ENCODE measurements at regions of chr10 and their contacts with region 1.

Region 1: GRCh38 chr10:73096449-73097304 is at the start of gene P4HA1:
- DNase-seq: peak; percentile 100
- ATAC-seq: peak; percentile 90 to 97 (median 94)
- H3K4me3 ChIP-seq: peak within 1 kb of the TSS; percentile 70
- H3K27ac ChIP-seq: peak within 1 kb of the TSS; percentile 96
- H3K4me1 ChIP-seq: peaks cover 52% of the 10 kb centered on the region
- H3K27me3 ChIP-seq: no peaks in the 10 kb centered on the region
- CTCF ChIP-seq: peak; percentile 59
- total RNA-seq, gene P4HA1: 38.1 to 205 (median 82.3) TPM

Region 2: DNA sequence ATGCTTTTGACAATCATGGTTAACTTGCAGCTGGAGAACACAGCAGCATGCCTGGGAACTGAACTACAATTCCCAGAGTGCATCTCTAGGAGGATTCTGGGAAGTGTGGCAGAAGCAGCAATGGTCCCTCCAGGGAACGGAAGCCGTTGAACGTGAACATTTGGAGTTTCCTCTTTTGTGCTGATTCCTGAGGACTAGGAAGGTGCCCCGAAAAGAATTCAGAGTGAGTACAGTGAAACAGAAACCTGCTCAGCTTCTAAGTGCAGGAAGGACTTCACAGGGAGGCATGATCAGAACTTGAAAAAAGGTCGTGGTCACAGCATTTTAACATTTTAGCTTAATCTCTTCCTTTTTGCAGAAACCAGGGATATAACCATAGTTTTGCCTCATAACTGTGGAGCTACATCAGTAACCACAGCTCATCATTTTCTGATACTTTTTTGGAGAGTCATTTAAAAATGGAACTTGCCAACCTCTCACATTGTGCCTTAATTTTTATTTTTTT is 13.7 kb after region 1 on chr10 and contains the start of gene NUDT13:
- intact Hi-C with region 1: loop called in 1 of 2 experiments (anchors 2 kb)
- DNase-seq: peak; percentile 55 to 69
- ATAC-seq: peak; percentile 75 to 85 (median 85)
- H3K4me3 ChIP-seq: peak within 1 kb of the TSS; percentile 74
- H3K27ac ChIP-seq: peak within 1 kb of the TSS; percentile 95
- H3K4me1 ChIP-seq: peaks cover 26% of the 10 kb centered on the region
- H3K27me3 ChIP-seq: no peaks in the 10 kb centered on the region
- CTCF ChIP-seq: no peak
- total RNA-seq, gene NUDT13: 1.1 to 3.2 (median 2.3) TPM

Region 3: DNA sequence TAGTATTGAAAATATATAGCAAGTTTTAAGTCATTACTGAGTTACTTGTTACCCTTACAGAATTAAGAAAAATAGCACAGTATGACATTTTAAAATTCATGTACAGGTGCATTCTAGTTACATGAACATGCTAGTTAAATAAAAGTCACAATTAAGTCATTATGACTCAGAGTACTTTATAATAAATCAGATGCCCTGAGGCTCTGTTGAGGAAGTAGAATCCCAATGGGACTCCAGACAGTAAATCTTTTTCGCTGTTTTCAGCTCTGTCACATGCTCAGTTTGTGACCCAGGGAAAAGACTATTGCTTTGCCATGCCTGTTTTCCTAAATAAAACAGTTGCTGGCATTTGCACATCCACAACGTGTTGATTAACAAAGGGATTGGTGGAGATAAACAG is 34.6 kb after region 1 on chr10:
- intact Hi-C with region 1: loop called in 1 of 2 experiments (anchors 5 kb)
- DNase-seq: no peak
- ATAC-seq: peak in 1 of 4 donors; percentile 35
- H3K4me3 ChIP-seq: no peak overlapping the region
- H3K27ac ChIP-seq: no peak overlapping the region
- H3K4me1 ChIP-seq: no peaks in the 10 kb centered on the region
- H3K27me3 ChIP-seq: no peaks in the 10 kb centered on the region
- CTCF ChIP-seq: no peak

Region 4: DNA sequence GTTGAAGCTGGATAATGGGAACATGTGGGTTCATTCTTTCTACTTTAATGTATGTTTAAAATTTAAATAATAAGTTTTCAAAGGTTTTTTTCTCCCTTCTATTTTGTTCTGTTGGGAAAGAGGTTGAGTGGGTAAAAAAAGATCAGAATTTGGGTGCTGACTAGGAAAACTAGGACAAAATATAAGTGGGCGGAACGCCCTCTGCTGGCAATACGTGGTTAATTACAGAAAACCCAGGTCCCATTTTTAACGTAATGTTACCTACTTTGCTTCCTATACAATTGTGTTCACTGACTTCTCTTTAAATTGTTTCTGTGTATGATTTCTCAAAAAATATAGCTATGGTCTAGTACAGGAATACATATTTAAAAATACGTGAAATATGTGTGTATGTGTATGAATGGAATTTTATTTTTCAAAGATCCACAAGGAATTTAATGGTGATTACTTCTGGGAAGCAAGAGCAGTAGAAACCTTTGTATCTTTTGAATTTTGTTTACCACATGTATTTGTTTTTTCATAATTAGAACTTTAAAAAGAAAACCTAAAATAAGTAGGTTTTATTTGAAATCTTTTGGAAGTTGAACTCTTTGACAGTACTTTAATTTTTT is 62.5 kb after region 1 on chr10:
- intact Hi-C with region 1: loop called (anchors 2 to 5 kb)
- DNase-seq: peak; percentile 29 to 63
- ATAC-seq: peak in 2 of 4 donors; percentile 50 to 79
- H3K4me3 ChIP-seq: no peak overlapping the region
- H3K27ac ChIP-seq: no peak overlapping the region
- H3K4me1 ChIP-seq: peaks cover 19% of the 10 kb centered on the region
- H3K27me3 ChIP-seq: no peaks in the 10 kb centered on the region
- CTCF ChIP-seq: peak; percentile 77

Measured in psoas muscle (tissue), 8 donors.